ENCODE measurements at regions of chr17 and their contacts with region 1.

Region 1: GRCh38 chr17:60065136-60065535 is 13.6 kb downstream of the HEATR6 start:
- DNase-seq: no peak
- ATAC-seq: no peak
- H3K4me3 ChIP-seq: no peak overlapping the region
- H3K27ac ChIP-seq: no peak overlapping the region
- H3K4me1 ChIP-seq: no peaks in the 10 kb centered on the region
- H3K27me3 ChIP-seq: no peaks in the 10 kb centered on the region
- CTCF ChIP-seq: no peak

Region 2: DNA sequence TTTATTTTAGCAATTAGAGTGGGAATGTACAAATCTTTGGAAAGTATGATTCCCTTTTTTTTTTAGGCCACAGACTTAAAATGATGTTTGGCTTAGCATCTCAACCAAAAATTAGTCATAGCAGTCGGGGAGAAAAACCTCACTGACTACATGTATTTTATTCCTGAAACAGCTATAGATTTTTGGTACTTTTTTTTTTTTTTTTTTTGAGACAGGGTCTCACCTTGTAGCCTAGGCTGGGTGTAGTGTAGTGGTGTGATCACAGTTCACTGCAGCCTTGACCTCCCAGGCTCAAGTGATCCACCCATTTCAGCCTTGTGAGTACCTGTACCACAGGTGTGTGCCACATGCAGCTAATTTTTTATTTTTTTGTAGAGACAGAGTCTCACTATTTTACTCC is 124.0 kb before region 1 on chr17:
- intact Hi-C with region 1: loop called in 1 of 10 experiments (anchors 10 kb)
- DNase-seq: no peak
- ATAC-seq: no peak
- H3K4me3 ChIP-seq: no peak overlapping the region
- H3K27ac ChIP-seq: no peak overlapping the region
- H3K4me1 ChIP-seq: no peaks in the 10 kb centered on the region
- H3K27me3 ChIP-seq: no peaks in the 10 kb centered on the region
- CTCF ChIP-seq: no peak

Region 3: DNA sequence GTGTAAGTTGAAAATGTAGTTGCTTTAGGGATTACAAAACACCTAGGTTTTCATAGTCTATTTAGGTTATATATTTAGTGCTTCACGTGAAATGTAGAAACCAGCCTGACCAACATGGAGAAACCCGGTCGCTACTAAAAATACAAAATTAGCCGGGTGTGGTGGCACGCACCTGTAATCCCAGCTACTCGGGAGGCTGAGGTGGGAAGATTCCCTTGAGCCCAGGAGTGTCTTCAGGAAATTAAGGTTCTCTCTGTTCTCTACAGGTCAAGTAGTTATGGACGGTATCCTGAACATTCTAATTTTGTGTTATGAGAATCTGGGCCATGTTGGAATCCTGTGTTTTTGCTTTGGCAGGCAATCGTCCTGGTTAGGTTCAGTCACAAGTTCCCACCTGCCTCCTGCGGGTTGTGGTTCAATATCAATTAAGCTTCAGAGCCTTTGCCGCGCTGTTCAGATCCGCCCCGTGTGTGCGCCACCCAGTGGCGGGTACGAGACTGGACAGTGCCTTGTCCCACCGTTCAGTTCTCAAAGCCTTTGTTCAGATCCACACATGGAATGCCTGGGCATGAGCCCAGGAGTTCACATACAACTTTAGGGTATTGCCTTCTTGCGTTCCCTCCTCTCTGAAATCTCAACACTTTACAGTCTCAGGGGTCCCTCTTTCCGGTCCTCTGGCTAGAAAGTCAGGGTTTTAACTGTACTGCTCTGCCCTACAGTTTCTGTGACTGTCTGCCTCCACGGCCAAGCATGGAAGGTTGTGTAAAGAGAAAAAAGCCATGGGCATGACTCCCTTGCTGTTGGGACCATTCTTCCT is 28.1 kb before region 1 on chr17:
- intact Hi-C with region 1: no loop called
- DNase-seq: peak; percentile 48 to 60
- ATAC-seq: peak; percentile 55 to 95 (median 84)
- H3K4me3 ChIP-seq: no peak overlapping the region
- H3K27ac ChIP-seq: no peak overlapping the region
- H3K4me1 ChIP-seq: peaks cover 0 to 8% (median 0%) of the 10 kb centered on the region in 9 donors
- H3K27me3 ChIP-seq: peaks cover 0 to 22% (median 6%) of the 10 kb centered on the region in 7 donors
- CTCF ChIP-seq: peak; percentile 74 to 94 (median 90)

Region 4: GRCh38 chr17:60049936-60050335 is 15.2 kb before region 1 on chr17:
- intact Hi-C with region 1: no loop called
- DNase-seq: no peak
- ATAC-seq: no peak
- H3K4me3 ChIP-seq: no peak overlapping the region
- H3K27ac ChIP-seq: no peak overlapping the region
- H3K4me1 ChIP-seq: no peaks in the 10 kb centered on the region
- H3K27me3 ChIP-seq: no peaks in the 10 kb centered on the region
- CTCF ChIP-seq: no peak